SK-N-SH (cell line): ENCODE measurements at regions of chr16 and their contacts with region 1.

Region 1: DNA sequence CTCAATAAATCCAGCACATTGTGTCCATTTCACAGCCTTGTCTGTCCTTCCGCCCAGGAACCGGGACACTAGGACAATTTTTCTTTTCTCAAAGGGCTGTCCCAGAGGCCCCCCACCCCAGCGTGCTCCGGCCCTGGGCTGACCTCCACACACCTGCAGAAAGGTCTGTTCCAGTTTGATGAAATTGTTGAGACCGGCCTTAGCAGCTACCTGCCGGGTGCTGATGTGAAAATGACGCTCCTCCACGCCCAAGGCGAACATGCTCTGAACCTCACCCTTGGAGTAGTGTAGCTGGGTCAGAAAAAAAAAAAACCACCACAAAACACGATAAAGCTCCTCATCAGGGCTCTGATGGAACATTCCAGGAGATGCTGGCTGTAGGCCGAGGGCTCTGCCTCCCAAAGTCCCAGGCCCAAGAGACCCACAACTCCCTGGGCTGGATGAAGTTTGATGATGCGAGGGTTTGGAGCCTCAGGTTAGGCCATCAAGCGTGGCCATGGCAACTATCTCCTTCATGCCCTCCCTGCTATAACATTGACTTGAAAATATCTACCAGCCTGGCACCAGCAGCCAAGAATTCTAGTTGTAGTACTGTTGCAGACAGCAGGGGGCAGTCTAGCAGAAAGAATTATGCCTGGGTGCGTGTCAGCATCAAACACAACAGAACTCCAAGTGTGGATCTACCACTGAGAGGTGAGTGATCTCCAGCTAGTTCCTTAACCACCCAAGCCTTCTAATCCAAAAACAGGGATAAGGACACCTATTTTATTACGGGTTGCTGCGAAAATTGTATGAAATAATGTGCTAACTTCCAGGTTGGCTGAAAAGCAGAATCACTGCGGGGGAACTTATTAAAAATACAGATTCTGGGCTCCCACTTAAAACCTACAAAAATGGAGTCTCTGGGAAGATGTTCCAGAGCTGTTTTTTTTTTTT is 62.1 kb downstream of the RMI2 start:
- DNase-seq: peak; percentile 75
- H3K4me3 ChIP-seq: no peak overlapping the region; a peak in 1 of 4 replicates
- H3K27ac ChIP-seq: no peak overlapping the region
- H3K4me1 ChIP-seq: peaks cover 17 to 36% of the 10 kb centered on the region in 2 experiments
- H3K27me3 ChIP-seq: no peaks in the 10 kb centered on the region
- CTCF ChIP-seq: peak; percentile 63
- EP300 ChIP-seq: no peak
- RAD21 ChIP-seq: peak; percentile 82

Region 2: GRCh38 chr16:11497851-11498289 is 90.6 kb after region 1 on chr16:
- CTCF ChIA-PET with region 1: interaction called, 7 read pairs
- POLR2A ChIA-PET with region 1: interaction called, 14 read pairs
- DNase-seq: no peak
- H3K4me3 ChIP-seq: no peak overlapping the region
- H3K27ac ChIP-seq: peak overlapping the region; percentile 92 to 94
- H3K4me1 ChIP-seq: peaks cover 32 to 45% of the 10 kb centered on the region in 2 experiments
- H3K27me3 ChIP-seq: no peaks in the 10 kb centered on the region
- CTCF ChIP-seq: no peak
- EP300 ChIP-seq: no peak
- RAD21 ChIP-seq: no peak

Region 3: GRCh38 chr16:11530171-11530940 is 123.0 kb after region 1 on chr16:
- CTCF ChIA-PET with region 1: interaction called, 65 read pairs
- POLR2A ChIA-PET with region 1: no interaction called
- DNase-seq: no peak
- H3K4me3 ChIP-seq: no peak overlapping the region
- H3K27ac ChIP-seq: no peak overlapping the region
- H3K4me1 ChIP-seq: peaks cover 0 to 8% of the 10 kb centered on the region in 2 experiments; a peak in 1 of 4 replicates
- H3K27me3 ChIP-seq: no peaks in the 10 kb centered on the region; the same call in 1 of the 2 replicates
- CTCF ChIP-seq: no peak
- EP300 ChIP-seq: no peak
- RAD21 ChIP-seq: no peak

Region 4: DNA sequence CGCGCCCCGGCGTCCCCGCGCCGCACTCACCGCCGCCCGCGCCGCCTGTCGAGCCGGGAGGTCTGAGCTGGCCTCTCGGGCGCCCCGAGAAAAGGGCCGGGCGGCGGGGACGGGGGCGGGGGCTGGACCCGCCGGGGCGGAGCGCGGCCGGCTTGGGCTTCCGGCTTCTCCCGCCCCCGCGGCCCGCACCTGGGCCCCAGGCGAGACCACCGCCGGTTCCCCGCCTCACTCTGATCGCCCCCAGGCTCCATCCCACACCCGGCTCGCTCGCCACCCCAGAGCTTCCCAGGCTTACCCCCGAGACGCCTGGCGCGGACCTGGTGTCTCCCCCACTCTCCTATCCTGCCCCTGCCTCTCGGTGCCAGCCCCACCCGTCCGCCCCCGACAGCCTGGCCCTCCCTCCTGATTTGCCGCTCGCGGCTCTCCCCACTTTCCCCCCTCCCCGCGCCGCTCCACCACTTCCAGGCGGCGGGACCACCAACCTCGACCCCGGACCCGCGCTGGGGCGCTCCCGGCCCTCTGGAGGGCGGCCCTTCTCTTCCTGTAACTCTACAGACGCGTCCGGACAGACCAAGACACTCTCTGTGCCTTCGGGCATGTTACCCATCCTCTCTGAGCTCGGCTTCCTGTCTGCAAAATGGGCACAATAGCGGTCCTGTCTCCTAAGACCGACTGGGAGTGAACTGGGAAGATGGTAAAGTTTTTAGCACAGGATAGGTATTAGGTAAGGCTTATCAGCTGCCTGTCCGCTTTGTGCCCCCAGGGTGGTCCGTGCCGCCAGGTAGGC is 179.7 kb after region 1 on chr16 and contains the start of gene LITAF:
- CTCF ChIA-PET with region 1: interaction called, 6 read pairs
- POLR2A ChIA-PET with region 1: interaction called, 13 read pairs
- DNase-seq: peak; percentile 92
- H3K4me3 ChIP-seq: peak within 1 kb of the TSS; percentile 69 to 93
- H3K27ac ChIP-seq: peak within 1 kb of the TSS; percentile 50 to 95
- H3K4me1 ChIP-seq: peaks cover 0 to 19% of the 10 kb centered on the region in 2 experiments; a peak in 1 of 4 replicates
- H3K27me3 ChIP-seq: no peaks in the 10 kb centered on the region
- CTCF ChIP-seq: no peak
- EP300 ChIP-seq: no peak
- RAD21 ChIP-seq: no peak
- polyA plus RNA-seq, gene LITAF: 26.6 and 45.7 TPM in 2 replicates

Region 5: GRCh38 chr16:11639925-11640899 is 232.9 kb after region 1 on chr16:
- CTCF ChIA-PET with region 1: interaction called, 38 read pairs
- POLR2A ChIA-PET with region 1: no interaction called
- DNase-seq: no peak
- H3K4me3 ChIP-seq: no peak overlapping the region
- H3K27ac ChIP-seq: peak overlapping the region in 1 of 2 experiments; percentile 89; a peak in 2 of 4 replicates
- H3K4me1 ChIP-seq: peaks cover 8 to 10% of the 10 kb centered on the region in 2 experiments; a peak in 3 of 4 replicates
- H3K27me3 ChIP-seq: no peaks in the 10 kb centered on the region
- CTCF ChIP-seq: no peak
- EP300 ChIP-seq: no peak; a peak in 1 of 4 replicates
- RAD21 ChIP-seq: no peak

Region 6: GRCh38 chr16:11715246-11715947 is 308.1 kb after region 1 on chr16:
- CTCF ChIA-PET with region 1: interaction called, 23 read pairs
- POLR2A ChIA-PET with region 1: no interaction called
- DNase-seq: no peak
- H3K4me3 ChIP-seq: no peak overlapping the region
- H3K27ac ChIP-seq: no peak overlapping the region
- H3K4me1 ChIP-seq: peaks cover 0 to 4% of the 10 kb centered on the region in 2 experiments; a peak in 1 of 4 replicates
- H3K27me3 ChIP-seq: no peaks in the 10 kb centered on the region
- CTCF ChIP-seq: no peak
- EP300 ChIP-seq: no peak
- RAD21 ChIP-seq: no peak